Prostate gland (tissue), 2 donors: ENCODE measurements at regions of chr9 and their contacts with region 1.

Region 1: GRCh38 chr9:34701769-34702736 is 7.9 kb downstream of the CCL21 start:
- DNase-seq: peak; percentile 83
- H3K4me3 ChIP-seq: peak overlapping the region; percentile 50 to 55
- H3K27ac ChIP-seq: peak overlapping the region; percentile 70 to 80
- H3K4me1 ChIP-seq: no peaks in the 10 kb centered on the region
- H3K27me3 ChIP-seq: no peaks in the 10 kb centered on the region
- CTCF ChIP-seq: peak; percentile 90 to 95 (median 94)
- POLR2A ChIP-seq: no peak

Region 2: DNA sequence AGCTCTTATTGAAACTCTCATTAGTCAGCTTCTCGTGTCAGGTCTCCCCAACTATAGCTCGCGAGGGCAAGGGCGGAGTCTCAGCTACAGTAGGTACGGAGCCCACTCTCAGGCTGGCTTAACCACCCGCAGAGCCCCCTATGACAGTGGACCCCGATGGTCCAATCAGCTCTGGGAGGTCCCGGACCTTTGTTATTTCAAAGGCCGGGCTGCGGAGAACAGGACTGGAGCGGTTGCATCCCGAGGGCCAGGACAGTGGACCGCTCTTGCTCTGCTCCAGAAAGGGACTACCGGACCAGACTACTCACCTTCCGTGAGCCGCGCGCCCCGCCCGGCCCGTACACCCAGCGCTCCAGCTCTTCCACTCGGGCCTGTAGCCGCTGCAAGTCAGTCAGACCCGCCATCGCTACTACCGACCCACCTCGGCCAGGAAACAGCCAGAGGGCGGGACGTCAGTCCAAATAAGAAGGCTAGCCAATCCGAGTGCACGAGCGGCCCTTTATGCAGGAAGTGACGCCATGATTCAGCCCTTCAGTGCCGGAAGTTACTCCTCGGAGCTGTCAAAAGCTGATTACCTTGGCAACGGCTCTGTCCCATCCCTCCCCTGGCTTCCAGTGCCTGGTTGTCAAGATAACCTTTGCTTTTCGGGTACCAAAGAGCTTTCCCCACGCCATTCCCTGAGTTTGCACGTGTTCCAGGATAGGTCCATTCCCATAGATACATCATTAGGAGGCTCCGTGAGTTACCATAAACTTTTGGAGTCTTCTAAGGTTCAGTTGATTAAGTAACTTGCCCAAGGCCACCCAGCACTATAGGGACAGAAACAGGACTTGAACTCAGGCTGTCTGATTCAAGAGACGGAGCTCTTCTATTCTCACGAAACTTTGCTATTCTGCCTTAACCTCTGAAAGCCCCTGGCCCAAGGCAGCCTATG is 81.7 kb before region 1 on chr9 and contains the start of gene DCTN3:
- intact Hi-C with region 1: loop called (anchors 5 kb)
- DNase-seq: peak; percentile 92
- H3K4me3 ChIP-seq: peak within 1 kb of the TSS; percentile 60 to 65
- H3K27ac ChIP-seq: peak within 1 kb of the TSS; percentile 28 to 31
- H3K4me1 ChIP-seq: peaks cover 7% of the 10 kb centered on the region
- H3K27me3 ChIP-seq: peaks cover 14% of the 10 kb centered on the region
- CTCF ChIP-seq: peak in 1 of 4 experiments; percentile 8
- POLR2A ChIP-seq: no peak
- total RNA-seq, gene DCTN3: 73.8 to 112 TPM

Region 3: GRCh38 chr9:34665381-34666250 is 36.4 kb before region 1 on chr9:
- intact Hi-C with region 1: loop called (anchors 5 kb)
- DNase-seq: peak; percentile 95
- H3K4me3 ChIP-seq: peak overlapping the region; percentile 63 to 84
- H3K27ac ChIP-seq: peak overlapping the region; percentile 96 to 99
- H3K4me1 ChIP-seq: peaks cover 7% of the 10 kb centered on the region
- H3K27me3 ChIP-seq: no peaks in the 10 kb centered on the region
- CTCF ChIP-seq: peak in 1 of 4 experiments; percentile 10
- POLR2A ChIP-seq: peak; percentile 69

Region 4: DNA sequence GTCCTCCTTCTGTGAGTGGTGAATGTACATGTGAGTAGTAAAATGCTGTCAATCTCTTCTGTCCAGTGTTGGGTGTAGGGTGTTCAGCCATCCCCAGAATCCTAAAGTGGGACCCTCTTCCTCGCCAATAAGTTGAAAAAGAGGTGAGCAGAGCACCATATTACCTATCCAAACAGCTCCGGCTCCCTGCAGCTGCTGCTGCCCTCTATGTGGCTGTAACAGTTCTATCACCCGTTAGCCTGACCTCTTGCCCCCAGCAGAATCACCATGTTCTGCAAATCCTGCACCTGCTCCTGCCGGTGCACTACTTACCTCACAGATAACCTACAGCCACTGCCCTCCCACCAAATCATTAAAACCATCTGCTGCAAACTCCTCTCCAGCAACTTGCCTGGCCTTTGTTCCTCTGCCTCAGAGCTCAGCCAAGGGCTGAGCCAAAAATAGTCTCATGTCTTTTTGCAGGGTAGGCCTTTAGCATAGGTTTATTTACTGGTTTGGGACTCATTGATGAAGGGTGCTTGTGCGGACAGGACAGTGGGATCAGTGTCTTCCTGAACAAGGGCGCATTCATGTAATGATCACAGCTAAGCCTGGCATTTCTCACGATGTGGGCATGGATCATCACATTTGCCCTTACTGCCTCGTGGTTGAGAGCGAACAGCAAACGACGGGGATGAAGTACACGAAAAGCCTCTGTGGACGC is 57.5 kb after region 1 on chr9:
- intact Hi-C with region 1: no loop called
- DNase-seq: no peak
- H3K4me3 ChIP-seq: no peak overlapping the region
- H3K27ac ChIP-seq: no peak overlapping the region
- H3K4me1 ChIP-seq: no peaks in the 10 kb centered on the region
- H3K27me3 ChIP-seq: no peaks in the 10 kb centered on the region
- CTCF ChIP-seq: no peak
- POLR2A ChIP-seq: no peak

Region 5: DNA sequence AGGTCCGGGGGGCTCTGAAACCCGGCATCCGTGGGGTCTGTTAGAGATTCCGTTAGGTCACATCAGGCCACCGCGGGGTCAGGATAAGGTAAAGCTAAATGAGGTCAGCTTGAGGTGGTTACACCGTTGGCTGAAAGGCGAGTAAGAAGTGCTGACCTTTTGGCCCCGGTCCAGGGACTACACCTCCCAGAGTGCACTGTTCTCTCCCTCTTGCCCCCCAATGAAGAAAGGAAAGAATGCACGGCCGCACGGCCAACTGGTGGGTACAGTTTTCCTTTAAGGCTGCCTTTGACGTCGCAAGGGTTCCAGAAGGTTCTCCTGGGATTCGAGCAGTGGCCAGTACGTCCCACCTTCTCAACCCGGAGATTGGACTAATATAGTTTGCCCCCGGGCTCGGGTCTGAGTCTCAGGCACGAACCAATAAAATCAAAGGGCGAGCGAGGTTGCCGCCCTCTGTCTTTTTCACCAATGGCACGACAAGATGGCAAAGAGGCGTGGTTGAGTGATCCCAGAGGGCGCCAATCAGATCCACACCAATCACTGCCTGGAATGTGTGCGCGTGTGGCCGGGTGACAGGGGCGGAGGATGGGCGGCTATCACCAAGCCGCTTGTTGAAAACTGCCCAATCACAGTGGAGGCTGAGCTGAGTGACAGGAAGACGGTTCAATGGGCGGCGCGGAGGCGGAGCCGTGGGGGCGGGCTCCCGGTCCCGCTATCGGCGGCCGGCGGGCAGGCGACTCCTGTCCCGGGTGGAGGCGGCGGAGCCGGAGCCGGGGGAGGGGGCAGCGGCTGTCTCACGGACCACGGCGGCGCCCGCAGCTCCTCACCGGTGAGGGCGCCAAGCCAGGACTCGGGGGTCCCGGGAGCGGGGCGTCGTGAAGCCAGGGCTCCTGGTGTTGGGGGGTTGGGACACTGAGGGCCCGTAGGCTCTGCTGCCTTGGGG is 287.2 kb after region 1 on chr9 and contains the start of gene DNAJB5:
- intact Hi-C with region 1: loop called (anchors 10 kb)
- DNase-seq: peak; percentile 99
- H3K4me3 ChIP-seq: peak within 1 kb of the TSS; percentile 95 to 96
- H3K27ac ChIP-seq: peak within 1 kb of the TSS; percentile 90 to 93
- H3K4me1 ChIP-seq: no peaks in the 10 kb centered on the region
- H3K27me3 ChIP-seq: no peaks in the 10 kb centered on the region
- CTCF ChIP-seq: no peak
- POLR2A ChIP-seq: peak; percentile 70
- total RNA-seq, gene DNAJB5: 16.5 to 43.3 TPM